Stomach (tissue), 19 donors: ENCODE measurements at regions of chr11 and their contacts with region 1.

Region 1: DNA sequence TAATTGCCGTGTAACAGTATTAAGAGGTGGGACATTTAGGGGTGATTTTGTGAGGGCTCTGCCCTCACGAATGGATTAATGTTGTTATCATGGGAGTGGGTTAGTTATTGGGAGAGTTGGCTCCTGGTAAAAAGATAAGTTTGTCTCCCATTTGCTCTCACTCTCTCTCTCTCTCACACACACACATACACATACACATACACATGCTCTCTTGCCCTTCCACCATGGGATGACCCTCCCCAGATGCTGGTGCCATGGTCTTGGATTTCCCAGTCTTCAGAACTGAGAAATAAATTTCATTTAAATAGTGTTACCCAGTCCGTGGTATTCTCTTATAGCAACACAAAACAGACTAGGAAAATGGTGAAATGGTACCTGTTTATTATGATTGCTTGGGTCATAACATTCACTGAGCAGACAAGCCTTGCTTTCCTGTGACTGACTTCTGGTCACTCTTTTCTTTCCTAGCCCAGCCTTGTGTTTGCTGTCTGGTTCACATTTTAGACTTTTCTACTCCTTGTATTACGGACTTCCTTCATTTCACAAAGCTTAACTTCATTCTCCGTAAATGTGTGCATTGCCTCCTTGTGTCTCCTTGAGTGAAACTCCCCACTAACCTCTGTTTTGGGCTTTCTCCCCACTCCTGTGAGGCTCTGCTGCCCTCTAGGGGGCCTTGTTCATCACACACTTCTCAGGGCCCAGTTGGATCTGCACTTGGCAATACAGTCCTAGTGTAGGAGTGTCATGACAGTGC is 206.5 kb upstream of the CTSC start:
- DNase-seq: peak; percentile 75 to 95
- H3K4me3 ChIP-seq: no peak overlapping the region
- H3K27ac ChIP-seq: no peak overlapping the region
- H3K4me1 ChIP-seq: peaks cover 0 to 4% (median 2%) of the 10 kb centered on the region in 4 donors
- H3K27me3 ChIP-seq: no peaks in the 10 kb centered on the region
- CTCF ChIP-seq: peak in 5 of 7 experiments; percentile 70 to 87 (median 83)
- EP300 ChIP-seq: no peak
- POLR2A ChIP-seq: no peak

Region 2: GRCh38 chr11:88231894-88232482 is 312.1 kb before region 1 on chr11:
- intact Hi-C with region 1: loop called (anchors 10 kb)
- DNase-seq: peak in 1 of 2 donors; percentile 63
- H3K4me3 ChIP-seq: no peak overlapping the region
- H3K27ac ChIP-seq: no peak overlapping the region
- H3K4me1 ChIP-seq: no peaks in the 10 kb centered on the region
- H3K27me3 ChIP-seq: no peaks in the 10 kb centered on the region
- CTCF ChIP-seq: peak in 5 of 7 experiments; percentile 22 to 60 (median 47)
- EP300 ChIP-seq: no peak
- POLR2A ChIP-seq: no peak

Region 3: GRCh38 chr11:88266919-88267318 is 277.2 kb before region 1 on chr11:
- intact Hi-C with region 1: no loop called
- DNase-seq: no peak
- H3K4me3 ChIP-seq: no peak overlapping the region
- H3K27ac ChIP-seq: no peak overlapping the region
- H3K4me1 ChIP-seq: no peaks in the 10 kb centered on the region
- H3K27me3 ChIP-seq: no peaks in the 10 kb centered on the region
- CTCF ChIP-seq: no peak
- EP300 ChIP-seq: no peak
- POLR2A ChIP-seq: no peak

Region 4: DNA sequence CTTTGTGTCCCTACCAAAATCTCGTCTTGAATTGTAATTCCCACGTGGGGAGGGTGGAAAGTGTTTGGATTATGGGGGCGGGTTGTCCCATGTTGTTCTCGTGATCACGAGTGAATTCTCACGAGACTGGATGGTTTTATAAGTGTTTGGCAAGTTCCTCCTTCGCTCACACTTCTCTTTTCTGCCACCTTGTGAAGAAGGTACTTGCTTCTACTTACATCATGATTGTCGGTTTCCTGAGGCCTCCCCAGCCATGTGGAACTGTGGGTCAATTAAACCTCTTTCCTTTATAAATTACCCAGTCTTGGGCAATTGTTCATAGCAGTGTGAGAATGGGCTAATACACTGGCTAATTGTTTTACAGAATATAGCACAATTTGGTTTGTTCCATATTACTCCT is 195.4 kb after region 1 on chr11:
- intact Hi-C with region 1: no loop called
- DNase-seq: no peak
- H3K4me3 ChIP-seq: no peak overlapping the region
- H3K27ac ChIP-seq: no peak overlapping the region
- H3K4me1 ChIP-seq: no peaks in the 10 kb centered on the region
- H3K27me3 ChIP-seq: no peaks in the 10 kb centered on the region
- CTCF ChIP-seq: no peak
- EP300 ChIP-seq: no peak
- POLR2A ChIP-seq: no peak

Region 5: DNA sequence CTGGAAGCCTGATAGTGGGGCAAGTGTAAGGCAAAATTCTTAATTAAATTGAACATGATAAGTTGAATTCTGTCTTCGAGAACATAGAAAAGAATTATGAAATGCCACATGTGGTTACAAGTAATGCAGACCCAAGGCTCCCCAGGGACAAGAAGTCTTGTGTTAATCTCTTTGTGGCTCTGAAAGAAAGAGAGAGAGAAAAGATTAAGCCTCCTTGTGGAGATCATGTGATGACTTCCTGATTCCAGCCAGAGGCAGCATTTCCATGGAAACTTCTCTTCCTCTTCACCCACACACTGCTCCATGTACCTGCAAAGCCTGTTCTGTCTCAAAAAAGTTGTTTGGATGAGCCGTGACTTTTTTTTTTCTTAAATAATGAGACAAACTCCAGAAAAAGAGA is 631.7 kb after region 1 on chr11:
- intact Hi-C with region 1: no loop called
- DNase-seq: no peak
- H3K4me3 ChIP-seq: no peak overlapping the region
- H3K27ac ChIP-seq: no peak overlapping the region
- H3K4me1 ChIP-seq: no peaks in the 10 kb centered on the region
- H3K27me3 ChIP-seq: no peaks in the 10 kb centered on the region
- CTCF ChIP-seq: no peak
- EP300 ChIP-seq: no peak
- POLR2A ChIP-seq: no peak